ENCODE measurements at regions of chr19 and their contacts with region 1.

Region 1: GRCh38 chr19:984165-984967 is at the start of gene WDR18:
- DNase-seq: peak; percentile 89
- H3K4me3 Mint-ChIP-seq: peak within 1 kb of the TSS; percentile 97
- H3K27ac Mint-ChIP-seq: peak within 1 kb of the TSS; percentile 94
- H3K4me1 Mint-ChIP-seq: peaks cover 11% of the 10 kb centered on the region
- H3K27me3 Mint-ChIP-seq: no peaks in the 10 kb centered on the region
- CTCF ChIP-seq: no peak
- total RNA-seq, gene WDR18: 81.9 and 96.7 TPM in 2 replicates

Region 2: GRCh38 chr19:796692-797527 is 187.5 kb before region 1 on chr19 and contains the start of gene PTBP1:
- CTCF ChIA-PET with region 1: no interaction called
- POLR2A ChIA-PET with region 1: interaction called, 10 read pairs
- intact Hi-C with region 1: no loop called
- DNase-seq: peak; percentile 100
- H3K4me3 Mint-ChIP-seq: peak within 1 kb of the TSS; percentile 91
- H3K27ac Mint-ChIP-seq: peak within 1 kb of the TSS; percentile 90
- H3K4me1 Mint-ChIP-seq: peaks cover 25% of the 10 kb centered on the region
- H3K27me3 Mint-ChIP-seq: no peaks in the 10 kb centered on the region
- CTCF ChIP-seq: no peak
- total RNA-seq, gene PTBP1: 348 and 431 TPM in 2 replicates

Region 3: GRCh38 chr19:925526-926322 is 58.6 kb before region 1 on chr19 and contains the start of gene ARID3A:
- CTCF ChIA-PET with region 1: interaction called, 83 read pairs
- POLR2A ChIA-PET with region 1: interaction called, 28 read pairs
- intact Hi-C with region 1: loop called (anchors 1 kb)
- DNase-seq: peak; percentile 81
- H3K4me3 Mint-ChIP-seq: peak within 1 kb of the TSS; percentile 73
- H3K27ac Mint-ChIP-seq: peak within 1 kb of the TSS; percentile 27
- H3K4me1 Mint-ChIP-seq: no peaks in the 10 kb centered on the region
- H3K27me3 Mint-ChIP-seq: no peaks in the 10 kb centered on the region
- CTCF ChIP-seq: no peak
- total RNA-seq, gene ARID3A: 10.2 and 13.1 TPM in 2 replicates

Region 4: DNA sequence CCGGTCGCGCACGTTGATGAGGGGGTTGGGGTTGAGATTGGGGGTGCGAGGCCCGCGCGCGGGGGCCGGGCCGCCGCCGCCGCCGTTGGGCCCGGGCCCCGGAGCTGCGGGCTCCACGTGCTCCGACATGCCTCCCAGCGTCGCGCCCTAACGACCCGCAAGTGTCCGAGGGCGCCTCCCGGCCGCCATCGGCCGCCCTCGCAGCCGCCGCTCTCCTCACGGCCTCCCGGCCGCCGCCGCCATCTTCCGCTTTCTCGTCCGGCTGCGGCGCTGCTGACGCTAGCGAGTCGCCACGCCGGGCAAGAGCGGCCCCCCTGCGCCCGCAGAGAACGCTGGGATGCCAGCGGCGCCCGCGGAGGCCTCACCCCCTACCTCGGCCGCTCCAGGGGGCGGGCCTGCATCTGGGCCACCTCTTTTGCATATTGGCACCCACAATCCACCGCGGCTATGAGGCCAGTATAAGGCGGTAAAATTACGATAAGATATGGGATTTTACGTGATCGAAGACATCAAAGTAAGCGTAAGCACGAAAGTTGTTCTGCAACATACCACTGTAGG is 36.6 kb after region 1 on chr19 and contains the start of gene TMEM259:
- CTCF ChIA-PET with region 1: interaction called, 3 read pairs
- POLR2A ChIA-PET with region 1: interaction called, 13 read pairs
- intact Hi-C with region 1: no loop called
- DNase-seq: peak; percentile 99
- H3K4me3 Mint-ChIP-seq: peak within 1 kb of the TSS; percentile 86
- H3K27ac Mint-ChIP-seq: peak within 1 kb of the TSS; percentile 99
- H3K4me1 Mint-ChIP-seq: peaks cover 17% of the 10 kb centered on the region
- H3K27me3 Mint-ChIP-seq: no peaks in the 10 kb centered on the region
- CTCF ChIP-seq: no peak
- total RNA-seq, gene TMEM259: 130 and 146 TPM in 2 replicates

Measured in MCF 10A (cell line).